Posterior cingulate gyrus (tissue), 11 donors: ENCODE measurements at regions of chr1 and their contacts with region 1.

Region 1: GRCh38 chr1:244864253-244865027 is at the start of gene HNRNPU:
- DNase-seq: peak; percentile 91 to 100 (median 96)

Region 2: GRCh38 chr1:244652699-244653466 is 211.6 kb before region 1 on chr1 and contains the start of gene DESI2:
- intact Hi-C with region 1: loop called (anchors 10 kb)
- DNase-seq: peak; percentile 97 to 100 (median 98)

Region 3: DNA sequence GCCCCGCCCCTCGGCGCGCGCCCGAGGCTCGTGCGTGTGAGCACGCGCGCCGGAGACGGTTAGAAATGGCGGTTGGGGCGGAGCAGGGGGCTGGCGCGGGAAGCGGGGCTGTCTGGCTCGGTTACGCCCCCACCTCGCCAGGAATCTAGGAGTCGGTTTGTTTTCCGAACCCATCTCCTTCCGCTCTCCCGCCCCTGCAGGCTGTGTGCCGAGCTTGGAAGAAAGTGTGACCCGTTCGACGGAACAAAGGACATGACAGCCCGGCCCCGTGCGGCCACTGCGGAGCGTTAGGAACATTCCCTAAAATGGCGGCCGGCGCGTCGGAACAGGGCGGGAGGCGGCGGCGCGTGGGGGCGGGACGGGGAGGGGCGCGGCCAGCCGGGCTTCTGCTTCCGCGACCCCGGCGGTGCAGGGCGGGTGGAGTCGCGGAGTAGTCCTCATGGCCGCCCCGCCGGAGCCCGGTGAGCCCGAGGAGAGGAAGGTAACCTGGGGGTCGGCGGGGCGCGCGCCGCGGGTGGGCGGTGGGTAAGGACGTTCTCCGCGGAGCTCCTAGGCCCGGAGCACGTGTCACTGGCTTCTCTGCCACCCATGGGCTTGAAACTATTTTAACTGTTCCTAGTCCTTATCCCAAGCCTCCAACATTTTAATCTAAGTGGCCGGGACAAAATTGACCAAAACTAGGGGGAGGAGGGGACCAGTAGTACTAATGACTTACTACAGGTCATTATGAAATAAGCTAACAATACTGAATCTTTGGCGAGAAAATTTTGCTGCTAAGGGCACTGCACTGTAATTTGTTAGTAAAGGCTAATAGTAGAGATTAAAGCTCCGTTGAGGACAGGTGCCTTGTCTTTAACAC is 28.9 kb before region 1 on chr1 and contains the start of gene COX20:
- intact Hi-C with region 1: loop called (anchors 1 kb)
- DNase-seq: peak; percentile 78 to 96 (median 84)

Region 4: GRCh38 chr1:244970661-244971551 is 106.5 kb after region 1 on chr1:
- intact Hi-C with region 1: loop called (anchors 1 kb)
- DNase-seq: peak; percentile 88 to 99 (median 92)

Region 5: DNA sequence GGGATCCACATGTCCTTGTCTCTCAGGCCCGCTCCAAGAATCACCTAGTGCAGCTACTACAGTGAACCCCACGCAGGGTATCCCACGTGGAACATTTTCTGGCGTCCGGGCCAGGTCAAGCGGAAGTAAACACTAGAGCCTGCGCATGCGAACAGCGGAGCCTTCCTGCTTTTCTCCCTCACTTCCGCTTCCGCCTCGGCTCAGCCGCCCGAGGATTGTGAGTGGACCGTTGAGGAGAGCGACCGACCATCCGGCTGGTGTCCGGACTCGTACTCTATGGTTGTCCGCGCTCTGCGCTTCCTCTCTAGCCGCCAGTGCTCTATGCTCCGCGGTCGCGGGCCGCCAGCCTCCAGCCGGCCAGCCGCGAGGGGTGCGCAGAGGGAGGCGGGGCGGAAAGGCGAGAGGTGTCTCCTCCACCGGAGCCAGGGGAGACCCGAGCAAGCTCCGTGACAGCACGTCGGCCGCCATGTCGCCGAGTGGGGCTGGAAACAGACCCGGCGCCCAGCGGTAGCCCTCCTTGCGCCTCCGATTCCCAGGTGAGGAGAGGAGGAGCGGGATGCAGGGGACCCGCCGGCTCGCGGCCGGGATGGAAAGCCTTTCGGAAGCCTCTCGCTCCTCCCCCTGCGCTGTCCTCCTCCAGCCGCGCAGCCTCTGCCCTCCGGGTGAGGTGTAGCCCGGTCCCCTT is 1701.8 kb after region 1 on chr1 and contains the starts of genes CNST and TFB2M:
- intact Hi-C with region 1: loop called (anchors 10 kb)
- DNase-seq: peak; percentile 95 to 99 (median 96)